Caco-2 (cell line): ENCODE measurements at regions of chr11 and their contacts with region 1.

Region 1: DNA sequence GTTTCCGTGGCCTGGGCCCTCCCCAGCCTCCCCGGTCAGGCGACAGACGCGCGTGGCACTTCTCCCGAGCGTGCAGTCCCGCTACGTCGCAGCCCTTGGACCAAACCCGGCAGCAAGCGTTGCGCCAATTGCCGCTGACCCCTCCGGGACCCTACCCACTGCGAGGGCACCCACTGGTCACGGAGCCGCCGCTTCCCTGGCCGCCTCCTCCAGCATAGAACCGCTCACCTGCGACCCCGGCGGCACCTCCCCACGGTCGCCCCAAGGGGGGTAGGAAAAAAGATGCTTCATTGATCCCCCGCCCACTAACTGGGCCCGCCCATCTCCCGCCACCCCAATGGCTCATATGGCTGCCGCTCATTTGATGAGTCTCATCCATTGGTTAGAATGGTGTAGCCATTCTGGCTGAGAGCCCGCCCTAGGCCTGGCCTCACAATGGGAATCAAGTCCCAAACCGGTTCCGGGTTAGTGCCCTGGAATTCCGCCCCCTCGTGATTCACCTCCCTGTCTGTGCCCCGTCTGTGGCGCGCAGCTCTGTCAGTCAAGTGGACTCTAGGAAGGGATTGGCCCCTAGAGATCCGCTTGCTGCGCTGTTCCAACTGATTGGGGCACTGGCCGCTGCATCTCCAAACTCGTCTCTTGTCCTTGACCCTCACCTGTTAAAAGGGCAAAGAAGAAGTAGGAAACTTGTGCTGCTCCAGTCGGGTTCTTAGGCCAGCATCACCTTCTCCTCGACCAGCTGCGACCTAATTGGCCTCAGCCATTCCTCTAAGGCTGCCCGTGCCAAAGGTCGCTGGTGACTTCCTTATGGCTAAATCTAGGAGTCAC is at the start of gene MSANTD4:
- DNase-seq: peak; percentile 100
- H3K4me3 ChIP-seq: peak within 1 kb of the TSS; percentile 81
- H3K4me3 Mint-ChIP-seq: peak within 1 kb of the TSS; percentile 86
- H3K27ac Mint-ChIP-seq: peak within 1 kb of the TSS; percentile 51
- H3K4me1 ChIP-seq: peaks cover 11% of the 10 kb centered on the region
- H3K4me1 Mint-ChIP-seq: peaks cover 13% of the 10 kb centered on the region
- H3K27me3 ChIP-seq: no peaks in the 10 kb centered on the region
- H3K27me3 Mint-ChIP-seq: no peaks in the 10 kb centered on the region
- CTCF ChIP-seq: peak in 1 of 2 experiments; percentile 3
- total RNA-seq, gene MSANTD4: 24.2 and 25.7 TPM in 2 replicates

Region 2: GRCh38 chr11:105968021-105968697 is 54.0 kb before region 1 on chr11:
- CTCF ChIA-PET with region 1: no interaction called
- POLR2A ChIA-PET with region 1: no interaction called
- intact Hi-C with region 1: loop called (anchors 2 kb)
- DNase-seq: no peak
- H3K4me3 ChIP-seq: no peak overlapping the region
- H3K4me3 Mint-ChIP-seq: no peak overlapping the region
- H3K27ac Mint-ChIP-seq: no peak overlapping the region
- H3K4me1 ChIP-seq: no peaks in the 10 kb centered on the region
- H3K4me1 Mint-ChIP-seq: no peaks in the 10 kb centered on the region
- H3K27me3 ChIP-seq: no peaks in the 10 kb centered on the region
- H3K27me3 Mint-ChIP-seq: no peaks in the 10 kb centered on the region
- CTCF ChIP-seq: no peak